Esophagus squamous epithelium (tissue), 5 donors: ENCODE measurements at regions of chr2 and their contacts with region 1.

Region 1: DNA sequence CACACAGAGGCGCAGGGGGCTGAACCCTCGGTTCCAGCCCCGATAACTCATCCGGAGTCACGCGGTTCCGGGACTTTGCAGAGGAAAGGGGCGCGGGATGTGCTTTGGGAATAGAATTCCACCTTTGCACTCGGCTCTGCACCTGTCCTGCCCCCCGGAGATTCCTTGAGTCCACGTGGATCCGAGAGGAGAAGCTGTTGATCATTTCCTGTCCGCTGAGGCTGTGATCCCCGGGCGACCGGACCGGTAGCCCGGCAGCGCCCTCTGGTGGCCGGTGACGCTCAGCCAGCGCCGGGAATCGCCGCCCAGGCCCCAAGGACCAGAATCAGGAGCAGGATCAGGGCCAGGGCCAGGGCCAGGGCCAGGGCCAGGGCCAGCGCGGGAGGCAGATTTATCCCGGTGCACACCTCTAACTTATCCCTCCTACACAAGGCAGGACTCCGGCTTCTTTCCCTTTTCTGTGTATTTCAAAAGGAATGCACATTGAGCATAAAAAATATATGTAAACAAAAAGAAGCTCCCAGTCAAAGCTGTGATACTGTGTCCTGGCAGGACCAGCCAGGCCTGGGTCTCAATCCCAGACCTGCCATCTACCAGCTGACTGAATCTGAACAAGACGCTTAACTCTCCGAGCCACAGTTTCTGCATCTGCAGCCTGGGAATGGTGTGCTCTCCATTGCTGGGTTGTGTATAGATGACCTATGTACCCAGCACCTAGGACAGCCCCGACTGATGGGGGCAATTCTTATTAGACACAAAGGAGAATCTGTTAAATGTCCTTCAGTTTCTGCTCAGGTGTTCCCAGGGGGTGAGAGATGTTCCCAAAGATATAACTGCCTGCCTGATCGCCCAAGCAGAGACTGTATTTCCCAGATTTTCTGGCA is 8.5 kb upstream of the SPATA3 start:
- DNase-seq: peak; percentile 4
- H3K4me3 ChIP-seq: peak overlapping the region; percentile 17 to 63 (median 39)
- H3K27ac ChIP-seq: no peak overlapping the region
- H3K4me1 ChIP-seq: peaks cover 4 to 10% (median 5%) of the 10 kb centered on the region in 3 donors
- H3K27me3 ChIP-seq: peaks cover 0 to 40% (median 0%) of the 10 kb centered on the region in 4 donors
- CTCF ChIP-seq: peak; percentile 75 to 93 (median 92)
- POLR2A ChIP-seq: no peak

Region 2: DNA sequence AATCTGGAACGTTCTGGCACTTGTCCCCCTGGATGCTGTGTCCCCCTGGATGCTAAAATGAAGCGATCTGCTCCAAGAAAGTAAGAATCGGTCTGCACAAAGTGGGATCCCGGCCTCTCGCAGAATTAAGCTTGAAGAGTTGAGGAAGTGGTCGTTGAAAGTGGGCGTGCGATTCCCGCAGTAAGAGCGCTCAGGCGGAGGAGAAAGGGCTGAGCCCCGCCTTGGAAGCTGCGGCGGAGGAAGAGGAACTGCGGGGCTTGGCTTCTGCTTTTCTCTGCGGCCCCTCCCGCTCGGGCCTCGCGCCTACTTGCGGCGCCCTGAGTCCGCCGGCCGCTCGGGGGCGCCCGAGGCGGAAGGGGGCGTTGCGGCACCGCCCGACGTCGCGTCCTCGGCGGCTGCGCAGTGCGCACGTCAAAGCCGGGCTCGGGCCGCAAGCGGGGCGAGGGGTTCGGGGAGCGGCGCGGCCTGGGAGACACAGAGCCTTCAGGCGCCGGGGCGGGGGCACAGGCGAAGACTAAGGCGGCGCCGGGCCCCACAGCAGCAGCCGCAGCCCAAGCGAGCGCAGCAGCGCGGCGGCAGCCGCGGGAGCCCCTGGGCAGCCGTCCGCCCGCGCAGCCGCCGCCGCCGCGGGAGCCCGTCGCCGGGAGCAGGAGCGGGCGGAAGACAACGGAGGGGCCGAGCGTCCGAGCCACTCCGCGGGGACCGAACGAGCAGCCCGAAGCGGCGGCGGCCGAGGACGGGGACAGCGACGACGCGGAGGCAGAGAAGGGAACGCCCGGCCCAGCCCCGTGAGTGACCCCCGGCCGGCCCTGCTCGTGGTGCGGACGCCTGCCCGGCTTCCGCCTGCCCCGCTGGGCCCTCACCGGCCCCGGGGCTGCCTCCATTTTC is 274.7 kb before region 1 on chr2 and contains the start of gene CAB39:
- intact Hi-C with region 1: no loop called
- DNase-seq: peak; percentile 61
- H3K4me3 ChIP-seq: peak within 1 kb of the TSS; percentile 82 to 98 (median 93)
- H3K27ac ChIP-seq: peak within 1 kb of the TSS; percentile 93 to 99 (median 97)
- H3K4me1 ChIP-seq: peaks cover 0 to 48% (median 22%) of the 10 kb centered on the region in 3 donors
- H3K27me3 ChIP-seq: no peaks in the 10 kb centered on the region
- CTCF ChIP-seq: peak; percentile 70 to 93 (median 87)
- POLR2A ChIP-seq: peak in 3 of 4 donors; percentile 84 to 96 (median 86)
- total RNA-seq, gene CAB39: 47.6 to 80.3 (median 71.8) TPM

Region 3: GRCh38 chr2:230828272-230828961 is 159.0 kb before region 1 on chr2:
- intact Hi-C with region 1: loop called (anchors 5 kb)
- DNase-seq: no peak
- H3K4me3 ChIP-seq: peak overlapping the region; percentile 9 to 66 (median 34)
- H3K27ac ChIP-seq: peak overlapping the region in 1 of 4 donors; percentile 29
- H3K4me1 ChIP-seq: peaks cover 13 to 22% (median 15%) of the 10 kb centered on the region in 3 donors
- H3K27me3 ChIP-seq: peaks cover 0 to 55% (median 4%) of the 10 kb centered on the region in 4 donors
- CTCF ChIP-seq: no peak
- POLR2A ChIP-seq: no peak

Region 4: DNA sequence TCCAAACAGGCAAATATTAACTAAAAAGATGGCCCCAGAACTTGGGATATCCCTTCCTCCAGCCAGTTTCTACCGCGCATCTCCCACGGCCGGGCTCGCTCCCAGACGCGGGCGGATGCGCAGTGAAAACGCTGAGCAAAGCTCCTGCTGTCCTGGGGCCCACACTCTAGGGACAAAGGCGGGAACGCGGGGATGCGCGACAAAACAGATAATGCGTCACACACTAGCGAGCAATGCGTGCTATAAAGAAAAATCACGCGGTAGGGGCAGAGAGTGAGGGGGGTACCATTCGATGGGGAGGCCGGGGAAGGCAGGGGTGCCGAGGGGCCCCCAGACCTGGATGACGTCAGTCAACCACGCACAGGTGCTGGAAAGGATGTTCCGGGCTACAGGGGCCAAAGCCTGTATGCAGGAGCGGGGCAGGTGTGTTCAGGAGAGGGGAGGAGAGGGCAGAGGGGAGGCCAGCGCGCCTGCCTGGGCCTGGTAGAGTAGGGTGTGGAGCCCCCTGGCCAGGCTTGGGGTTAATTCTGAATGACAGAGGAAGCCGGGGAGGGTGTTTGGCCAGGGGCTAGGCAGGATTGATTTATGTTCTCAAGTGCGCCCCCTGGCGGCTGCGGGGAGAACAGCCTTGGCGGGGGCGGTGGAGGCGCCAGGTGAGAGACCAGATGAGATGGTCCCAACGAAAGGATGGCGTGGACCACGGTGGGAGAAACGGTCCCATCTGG is 137.6 kb before region 1 on chr2:
- intact Hi-C with region 1: loop called (anchors 5 kb)
- DNase-seq: no peak
- H3K4me3 ChIP-seq: no peak overlapping the region
- H3K27ac ChIP-seq: no peak overlapping the region
- H3K4me1 ChIP-seq: peaks cover 0 to 8% (median 0%) of the 10 kb centered on the region in 3 donors
- H3K27me3 ChIP-seq: peaks cover 0 to 47% (median 0%) of the 10 kb centered on the region in 4 donors
- CTCF ChIP-seq: peak; percentile 63 to 75 (median 68)
- POLR2A ChIP-seq: no peak

Region 5: DNA sequence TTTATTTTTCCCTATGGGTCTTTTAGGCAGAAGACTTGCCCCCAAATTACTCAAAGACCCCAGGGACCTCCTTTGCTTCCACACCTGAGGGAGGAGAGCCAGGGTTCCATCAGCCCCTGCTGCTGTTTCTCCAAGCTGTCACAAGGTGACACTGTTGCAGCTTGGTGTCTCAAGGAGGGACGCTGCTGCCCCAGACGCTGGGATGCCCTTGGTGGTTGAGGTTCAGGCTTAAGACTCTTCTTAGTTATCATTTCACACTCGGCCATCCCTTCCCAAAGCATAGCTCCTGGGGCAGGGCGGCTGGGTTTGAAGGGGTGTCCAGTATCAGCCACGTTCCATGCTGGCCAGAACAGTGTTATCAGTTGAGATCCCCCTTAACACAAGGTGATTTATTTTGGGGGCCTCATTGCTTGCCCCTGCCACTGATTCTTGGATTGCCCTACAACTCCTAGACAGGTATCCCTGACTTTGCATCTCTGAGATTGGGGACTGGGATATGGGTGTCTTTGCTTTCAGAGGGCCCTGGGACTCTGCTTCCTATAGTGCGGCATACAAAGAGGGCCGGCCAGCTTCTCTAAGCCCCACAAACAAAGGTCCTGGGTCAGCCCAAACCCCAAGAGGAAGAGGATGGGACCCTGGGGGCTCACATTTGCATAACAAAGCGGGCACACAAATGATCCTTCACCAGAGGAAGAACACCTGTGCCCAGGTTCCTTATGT is 85.0 kb before region 1 on chr2:
- intact Hi-C with region 1: loop called (anchors 5 kb)
- DNase-seq: no peak
- H3K4me3 ChIP-seq: no peak overlapping the region
- H3K27ac ChIP-seq: no peak overlapping the region
- H3K4me1 ChIP-seq: no peaks in the 10 kb centered on the region
- H3K27me3 ChIP-seq: peaks cover 0 to 18% (median 0%) of the 10 kb centered on the region in 4 donors
- CTCF ChIP-seq: peak; percentile 33 to 67 (median 42)
- POLR2A ChIP-seq: no peak

Region 6: DNA sequence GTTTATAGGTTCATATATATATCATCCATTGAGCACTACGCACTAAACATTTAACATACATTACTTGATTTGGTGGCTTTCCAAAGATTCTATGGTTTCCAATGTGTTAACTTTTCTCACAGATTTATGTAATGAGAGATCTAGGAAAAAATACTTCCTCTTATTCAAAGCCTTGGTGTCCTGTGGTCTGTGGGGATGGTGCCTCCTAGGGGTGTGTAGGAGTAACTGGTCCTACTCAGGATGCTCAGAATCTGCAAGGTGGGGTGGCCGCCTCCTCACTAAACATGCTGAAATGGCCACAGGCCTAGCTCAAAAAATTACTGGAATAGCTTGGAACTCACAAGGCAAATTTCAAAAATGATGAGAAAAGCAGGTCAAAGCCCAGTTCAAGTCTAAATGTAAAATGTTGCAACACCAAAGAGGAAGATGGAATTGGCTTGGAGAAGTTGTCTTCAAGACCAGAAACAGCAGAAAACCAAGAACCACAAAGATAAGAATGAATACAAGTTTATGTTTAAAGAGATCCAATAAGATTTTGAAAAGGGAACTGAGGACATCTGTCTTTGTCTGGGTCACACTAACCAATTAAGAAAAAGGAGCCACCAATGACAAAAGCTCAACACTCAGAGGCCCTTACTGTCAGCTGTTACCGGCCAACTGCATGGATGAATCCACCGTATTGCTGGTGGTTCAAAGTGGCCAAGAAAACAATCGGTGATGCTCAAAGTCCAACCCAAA is 73.8 kb before region 1 on chr2:
- intact Hi-C with region 1: no loop called
- DNase-seq: no peak
- H3K4me3 ChIP-seq: no peak overlapping the region
- H3K27ac ChIP-seq: no peak overlapping the region
- H3K4me1 ChIP-seq: peaks cover 0 to 6% (median 0%) of the 10 kb centered on the region in 3 donors
- H3K27me3 ChIP-seq: peaks cover 0 to 46% (median 0%) of the 10 kb centered on the region in 4 donors
- CTCF ChIP-seq: peak in 5 of 6 experiments; percentile 33 to 48 (median 35)
- POLR2A ChIP-seq: no peak